Natural killer cell (primary cell): ENCODE measurements at regions of chr2 and their contacts with region 1.

Region 1: DNA sequence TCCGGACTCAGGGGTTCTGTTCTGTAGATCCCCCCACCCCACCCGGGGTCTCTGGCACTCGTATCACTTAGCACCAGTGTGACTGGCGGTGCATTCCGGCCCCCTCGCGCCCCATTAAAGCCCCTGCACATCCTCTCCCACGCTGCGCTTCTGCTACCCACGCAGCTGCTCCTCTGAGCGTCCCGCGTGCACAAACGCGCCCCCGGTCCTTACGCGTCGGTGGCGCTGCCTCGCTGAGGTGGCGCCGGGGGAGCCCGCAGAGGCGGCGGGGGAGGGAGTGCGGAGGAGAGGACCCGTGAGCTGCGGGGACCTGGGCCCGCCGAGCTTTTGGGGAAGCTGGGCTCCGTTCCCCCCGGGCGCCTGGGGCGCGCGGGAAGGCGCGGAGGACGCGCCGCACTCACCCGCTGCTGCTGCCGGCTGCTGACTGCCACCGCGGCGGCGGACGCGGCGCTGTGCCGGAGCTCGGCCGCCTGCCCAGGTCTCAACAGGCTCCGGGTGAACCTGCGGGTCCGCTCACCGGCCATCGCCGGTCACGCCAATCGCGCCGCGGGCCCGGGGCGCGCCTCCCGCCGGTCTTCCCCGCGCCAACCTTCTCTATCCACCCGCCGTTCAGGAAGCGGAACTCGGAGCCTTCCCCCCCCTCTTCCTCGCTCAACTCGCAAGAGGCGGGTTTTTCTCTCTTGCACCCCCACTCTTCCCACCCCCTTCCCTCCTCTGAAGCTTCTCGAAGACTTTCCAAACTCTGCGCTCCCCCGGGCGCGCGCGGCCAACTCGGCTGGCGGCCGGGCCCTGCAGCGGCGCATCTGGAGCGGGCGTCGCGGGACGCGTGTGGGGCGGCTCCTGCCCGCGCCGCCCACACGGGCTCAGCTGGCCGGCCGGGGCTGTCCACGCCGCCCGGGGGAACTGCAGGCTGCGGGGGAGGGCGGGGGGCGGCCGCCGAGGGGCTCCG is at the start of gene DOCK10:
- DNase-seq: peak; percentile 37 to 78
- ATAC-seq: peak; percentile 47 to 73 (median 53)
- H3K4me3 ChIP-seq: peak within 1 kb of the TSS; percentile 86
- H3K4me3 Mint-ChIP-seq: peak within 1 kb of the TSS; percentile 98
- H3K27ac ChIP-seq: peak within 1 kb of the TSS; percentile 95
- H3K27ac Mint-ChIP-seq: peak within 1 kb of the TSS; percentile 100
- H3K4me1 ChIP-seq: peaks cover 18% of the 10 kb centered on the region
- H3K4me1 Mint-ChIP-seq: peaks cover 55 to 56% of the 10 kb centered on the region in 2 donors
- H3K27me3 ChIP-seq: no peaks in the 10 kb centered on the region
- H3K27me3 Mint-ChIP-seq: peaks cover 0 to 5% of the 10 kb centered on the region in 2 donors
- CTCF ChIP-seq: no peak
- total RNA-seq, gene DOCK10: 181 to 213 (median 182) TPM

Region 2: GRCh38 chr2:225008935-225009334 is 33.2 kb before region 1 on chr2:
- intact Hi-C with region 1: loop called (anchors 5 kb)
- DNase-seq: peak in 1 of 2 donors; percentile 62
- ATAC-seq: peak in 2 of 3 donors; percentile 33 to 61
- H3K4me3 ChIP-seq: no peak overlapping the region
- H3K4me3 Mint-ChIP-seq: no peak overlapping the region
- H3K27ac ChIP-seq: no peak overlapping the region
- H3K27ac Mint-ChIP-seq: peak overlapping the region; percentile 83 to 90
- H3K4me1 ChIP-seq: peaks cover 4% of the 10 kb centered on the region
- H3K4me1 Mint-ChIP-seq: peaks cover 82 to 86% of the 10 kb centered on the region in 2 donors
- H3K27me3 ChIP-seq: no peaks in the 10 kb centered on the region
- H3K27me3 Mint-ChIP-seq: no peaks in the 10 kb centered on the region
- CTCF ChIP-seq: peak; percentile 64

Region 3: DNA sequence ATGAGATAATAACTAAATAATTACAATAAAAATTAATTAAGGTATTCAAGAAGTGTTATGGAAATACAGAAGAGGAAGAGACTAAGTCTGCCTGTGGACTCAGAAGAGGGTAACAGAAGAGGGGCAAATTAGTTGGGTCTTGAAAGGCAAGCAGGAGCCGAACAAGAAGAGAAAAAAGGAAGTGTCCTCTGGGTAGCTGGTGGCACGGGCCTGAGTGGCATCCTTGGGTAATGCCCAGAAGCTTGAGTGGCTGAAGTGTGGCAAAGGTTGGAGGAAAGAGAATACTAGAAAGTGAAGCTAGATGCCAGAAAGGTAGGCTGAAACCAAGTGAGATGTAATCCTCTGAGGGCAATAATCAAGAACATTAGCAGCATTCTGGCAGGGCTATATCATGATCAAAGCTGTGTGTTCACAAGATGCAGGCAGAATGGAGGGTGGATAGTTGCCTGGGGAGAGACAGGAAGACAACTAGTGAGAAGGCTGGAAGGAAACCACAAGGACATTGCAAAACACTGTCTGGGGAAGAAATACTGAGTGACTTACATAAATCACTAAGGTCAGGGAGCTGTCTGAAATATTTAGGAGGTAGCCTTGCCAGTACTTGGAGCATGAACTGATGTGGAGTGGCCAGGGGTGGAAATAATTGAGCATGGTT is 16.1 kb before region 1 on chr2:
- intact Hi-C with region 1: loop called (anchors 1 kb)
- DNase-seq: peak in 1 of 2 donors; percentile 55
- ATAC-seq: peak; percentile 12 to 51 (median 27)
- H3K4me3 ChIP-seq: no peak overlapping the region
- H3K4me3 Mint-ChIP-seq: peak overlapping the region; percentile 47
- H3K27ac ChIP-seq: peak overlapping the region; percentile 72
- H3K27ac Mint-ChIP-seq: peak overlapping the region; percentile 76 to 95
- H3K4me1 ChIP-seq: peaks cover 51% of the 10 kb centered on the region
- H3K4me1 Mint-ChIP-seq: peaks cover 70 to 77% of the 10 kb centered on the region in 2 donors
- H3K27me3 ChIP-seq: no peaks in the 10 kb centered on the region
- H3K27me3 Mint-ChIP-seq: no peaks in the 10 kb centered on the region
- CTCF ChIP-seq: no peak

Region 4: DNA sequence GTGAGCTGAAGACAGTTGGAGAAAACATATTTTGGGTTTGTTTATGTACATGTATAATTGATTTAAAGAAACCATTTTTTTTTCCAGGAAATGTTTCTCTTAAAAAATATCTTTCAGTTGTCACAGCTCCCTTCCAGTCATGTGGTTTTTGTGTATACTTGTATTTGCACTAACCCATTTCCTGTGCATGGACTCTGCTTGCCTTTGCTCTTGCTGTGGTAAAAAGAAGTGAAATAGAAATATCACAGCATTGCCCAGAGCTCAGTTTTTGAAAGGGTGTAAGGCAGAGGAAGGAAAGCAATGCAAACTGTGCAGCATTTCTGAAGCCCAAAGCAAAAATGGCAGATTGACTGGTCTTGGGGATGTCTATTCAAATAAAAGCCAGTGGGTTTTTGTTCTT is 10.6 kb after region 1 on chr2:
- intact Hi-C with region 1: loop called (anchors 1 kb)
- DNase-seq: peak in 1 of 2 donors; percentile 72
- ATAC-seq: peak; percentile 82 to 90 (median 86)
- H3K4me3 ChIP-seq: no peak overlapping the region
- H3K4me3 Mint-ChIP-seq: peak overlapping the region; percentile 76
- H3K27ac ChIP-seq: peak overlapping the region; percentile 68
- H3K27ac Mint-ChIP-seq: peak overlapping the region; percentile 84 to 85
- H3K4me1 ChIP-seq: peaks cover 30% of the 10 kb centered on the region
- H3K4me1 Mint-ChIP-seq: peaks cover 40 to 43% of the 10 kb centered on the region in 2 donors
- H3K27me3 ChIP-seq: no peaks in the 10 kb centered on the region
- H3K27me3 Mint-ChIP-seq: peaks cover 3 to 4% of the 10 kb centered on the region in 2 donors
- CTCF ChIP-seq: no peak

Region 5: GRCh38 chr2:225100856-225101294 is 58.8 kb after region 1 on chr2:
- intact Hi-C with region 1: no loop called
- DNase-seq: no peak
- ATAC-seq: no peak
- H3K4me3 ChIP-seq: no peak overlapping the region
- H3K4me3 Mint-ChIP-seq: no peak overlapping the region
- H3K27ac ChIP-seq: no peak overlapping the region
- H3K27ac Mint-ChIP-seq: no peak overlapping the region
- H3K4me1 ChIP-seq: no peaks in the 10 kb centered on the region
- H3K4me1 Mint-ChIP-seq: peaks cover under 1 to 1% of the 10 kb centered on the region in 2 donors
- H3K27me3 ChIP-seq: no peaks in the 10 kb centered on the region
- H3K27me3 Mint-ChIP-seq: no peaks in the 10 kb centered on the region
- CTCF ChIP-seq: no peak